WTC11 (cell line): ENCODE measurements at regions of chr20 and their contacts with region 1.

Region 1: GRCh38 chr20:20199361-20200160 is 147.2 kb downstream of the CFAP61 start:
- DNase-seq: no peak
- ATAC-seq: peak; percentile 86
- H3K4me3 Mint-ChIP-seq: no peak overlapping the region
- H3K27ac Mint-ChIP-seq: no peak overlapping the region
- H3K4me1 Mint-ChIP-seq: peaks cover 35% of the 10 kb centered on the region
- H3K27me3 Mint-ChIP-seq: no peaks in the 10 kb centered on the region
- CTCF ChIP-seq: no peak

Region 2: GRCh38 chr20:20167698-20168097 is 31.9 kb before region 1 on chr20:
- CTCF ChIA-PET with region 1: no interaction called
- POLR2A ChIA-PET with region 1: no interaction called
- DNase-seq: no peak
- ATAC-seq: no peak
- H3K4me3 Mint-ChIP-seq: no peak overlapping the region
- H3K27ac Mint-ChIP-seq: no peak overlapping the region
- H3K4me1 Mint-ChIP-seq: 0 out of 2 replicates have a peak, but pooled peaks cover 3% of the 10 kb centered on the region
- H3K27me3 Mint-ChIP-seq: no peaks in the 10 kb centered on the region
- CTCF ChIP-seq: no peak

Region 3: DNA sequence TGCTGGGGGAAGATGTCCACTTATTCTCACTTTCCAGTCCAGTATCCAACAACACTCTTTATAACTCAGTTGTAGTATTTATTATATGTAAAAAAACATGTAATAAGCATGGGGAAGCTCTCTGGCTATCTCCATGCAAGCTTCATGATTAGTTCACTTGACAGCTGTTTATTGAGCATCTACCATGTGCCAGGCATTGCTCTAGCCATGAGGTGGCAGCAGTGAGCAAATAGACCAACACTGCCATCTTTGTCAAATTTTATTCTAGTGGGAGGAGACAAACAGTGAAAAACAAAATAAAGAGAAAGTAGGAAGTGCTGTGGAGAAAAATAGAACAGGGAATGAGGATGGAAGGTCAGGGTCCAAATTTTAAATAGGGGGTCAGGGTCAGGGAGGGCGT is 15.4 kb before region 1 on chr20:
- CTCF ChIA-PET with region 1: interaction called, 11 read pairs
- POLR2A ChIA-PET with region 1: interaction called, 3 read pairs
- DNase-seq: peak; percentile 29
- ATAC-seq: no peak
- H3K4me3 Mint-ChIP-seq: no peak overlapping the region
- H3K27ac Mint-ChIP-seq: no peak overlapping the region
- H3K4me1 Mint-ChIP-seq: 0 out of 2 replicates have a peak, but pooled peaks cover 2% of the 10 kb centered on the region
- H3K27me3 Mint-ChIP-seq: peaks cover 3% of the 10 kb centered on the region; the same call in 1 of the 2 replicates
- CTCF ChIP-seq: peak; percentile 47